Cardiac septum (tissue), 1 donor: ENCODE measurements at regions of chr16 and their contacts with region 1.

Region 1: DNA sequence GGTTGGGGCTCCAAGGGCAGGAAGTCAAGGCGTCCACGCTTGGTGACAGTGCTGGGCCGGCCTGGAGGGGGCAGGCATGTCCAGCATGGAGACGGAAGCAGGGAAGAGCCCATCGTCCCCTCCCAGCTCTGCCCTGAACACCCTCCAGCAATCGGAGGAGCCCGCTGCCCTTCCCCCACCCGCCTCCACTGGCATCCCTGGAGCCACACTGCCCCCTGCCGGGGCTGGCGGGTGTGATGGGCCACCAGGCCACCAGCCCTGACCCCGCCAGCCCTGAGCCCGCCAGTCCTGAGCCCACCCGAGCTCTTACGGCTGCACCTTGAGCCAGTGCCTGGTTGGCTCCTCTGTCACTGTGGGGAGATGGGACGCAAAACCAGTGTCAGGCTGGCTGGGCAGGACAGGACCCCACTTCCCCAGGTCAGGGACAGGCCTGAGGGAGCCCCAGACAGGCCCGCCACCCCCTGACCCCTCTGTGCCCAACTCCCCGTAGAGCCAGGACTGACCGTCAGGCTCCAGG is 4.1 kb upstream of the CDH15 start:
- DNase-seq: peak; percentile 92

Region 2: GRCh38 chr16:88633684-88634140 is 533.8 kb before region 1 on chr16:
- intact Hi-C with region 1: no loop called
- DNase-seq: no peak

Region 3: DNA sequence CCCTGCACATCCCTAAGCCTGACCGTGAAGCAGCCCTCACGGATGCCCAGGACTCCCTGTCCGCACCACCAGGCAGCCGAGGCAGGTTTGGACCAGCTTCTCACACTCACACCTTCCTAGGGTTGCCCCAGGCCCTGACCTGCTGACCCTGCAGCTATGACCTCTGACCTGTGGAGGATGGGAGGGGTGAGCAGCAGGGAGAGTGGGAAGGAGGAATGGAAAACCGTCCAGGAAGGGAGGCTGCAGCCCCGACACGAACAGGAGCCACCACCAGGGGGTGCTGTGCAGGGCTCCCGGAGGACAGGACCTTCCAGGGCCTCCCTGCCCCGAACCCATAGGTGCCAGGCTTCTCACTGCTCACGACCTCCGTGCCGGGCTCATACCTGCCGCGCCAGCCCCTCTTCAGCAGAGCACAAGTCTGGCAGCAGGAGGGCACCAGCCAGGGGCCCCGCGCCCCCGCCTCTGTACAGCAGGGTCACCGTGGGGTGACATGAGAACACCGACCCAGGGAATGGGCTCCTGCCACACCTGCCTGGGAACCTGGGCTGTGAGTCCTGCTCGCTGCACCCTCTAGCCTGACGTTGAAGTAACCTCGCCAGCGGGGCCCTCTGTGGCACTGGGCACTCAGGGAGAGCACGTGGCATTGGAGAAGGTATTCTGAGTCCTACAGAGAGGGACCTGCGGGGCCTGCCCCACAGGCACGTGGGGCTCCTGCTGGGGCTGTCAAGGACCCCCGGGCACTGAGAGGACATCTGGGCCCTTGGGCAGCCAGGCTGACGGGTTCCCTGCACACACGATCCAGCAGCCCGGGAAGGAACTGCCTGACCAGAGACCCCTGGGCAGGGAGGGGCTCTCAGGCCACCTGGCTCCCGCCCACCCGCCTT is 423.5 kb before region 1 on chr16:
- intact Hi-C with region 1: loop called (anchors 5 kb)
- DNase-seq: peak; percentile 88

Region 4: GRCh38 chr16:88811769-88812512 is 355.5 kb before region 1 on chr16 and contains the start of gene APRT:
- intact Hi-C with region 1: loop called (anchors 5 kb)
- DNase-seq: peak; percentile 98
- total RNA-seq, gene APRT: 46.6 TPM

Region 5: DNA sequence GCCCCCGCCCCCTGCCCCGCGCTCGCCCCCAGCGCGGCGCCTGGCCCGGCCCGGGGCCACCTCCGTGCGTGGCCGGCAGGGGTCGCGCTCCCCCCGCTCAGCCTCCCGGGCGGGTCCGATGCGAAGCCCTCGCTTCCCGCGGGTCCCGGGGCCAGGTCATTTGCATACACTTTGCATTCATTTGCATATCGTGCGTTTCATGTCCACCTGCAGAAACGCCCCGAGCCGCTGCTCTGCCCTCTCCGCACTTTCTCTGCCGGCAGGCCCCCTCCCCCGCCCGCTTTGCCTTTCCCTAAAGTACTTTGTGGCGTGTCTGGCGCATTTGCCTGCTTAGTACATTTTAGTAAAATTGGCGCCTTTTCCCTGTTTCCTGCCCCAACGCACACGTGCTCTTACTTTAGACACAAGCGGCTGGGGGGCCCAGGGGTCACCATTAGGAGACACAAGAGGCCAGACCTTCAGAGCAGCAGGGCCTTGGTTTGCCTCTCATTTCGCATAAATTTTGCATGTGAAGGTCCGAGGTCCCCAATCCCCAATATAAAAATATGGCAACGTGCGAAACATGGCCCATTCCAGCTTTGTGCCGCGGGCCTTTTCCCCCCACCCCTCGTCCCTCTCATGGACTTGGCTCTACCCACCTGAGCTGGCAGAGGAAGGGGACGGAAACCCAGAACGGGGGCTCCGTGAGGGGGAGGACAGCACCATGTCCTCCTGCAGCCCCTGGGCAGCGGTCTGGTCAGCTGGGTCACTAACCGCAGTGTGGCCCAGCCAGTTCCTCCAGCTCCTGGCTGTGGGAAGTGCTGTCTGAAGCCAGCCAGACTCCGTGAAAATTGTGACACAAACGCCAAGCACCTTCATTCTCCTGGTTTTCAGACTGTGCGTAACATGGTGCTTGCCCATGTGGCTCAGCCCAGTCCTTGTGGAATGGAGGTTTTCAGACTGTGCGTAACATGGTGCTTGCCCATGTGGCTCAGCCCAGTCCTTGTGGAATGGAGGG is 225.3 kb before region 1 on chr16:
- intact Hi-C with region 1: loop called (anchors 2 kb)
- DNase-seq: peak; percentile 89

Region 6: DNA sequence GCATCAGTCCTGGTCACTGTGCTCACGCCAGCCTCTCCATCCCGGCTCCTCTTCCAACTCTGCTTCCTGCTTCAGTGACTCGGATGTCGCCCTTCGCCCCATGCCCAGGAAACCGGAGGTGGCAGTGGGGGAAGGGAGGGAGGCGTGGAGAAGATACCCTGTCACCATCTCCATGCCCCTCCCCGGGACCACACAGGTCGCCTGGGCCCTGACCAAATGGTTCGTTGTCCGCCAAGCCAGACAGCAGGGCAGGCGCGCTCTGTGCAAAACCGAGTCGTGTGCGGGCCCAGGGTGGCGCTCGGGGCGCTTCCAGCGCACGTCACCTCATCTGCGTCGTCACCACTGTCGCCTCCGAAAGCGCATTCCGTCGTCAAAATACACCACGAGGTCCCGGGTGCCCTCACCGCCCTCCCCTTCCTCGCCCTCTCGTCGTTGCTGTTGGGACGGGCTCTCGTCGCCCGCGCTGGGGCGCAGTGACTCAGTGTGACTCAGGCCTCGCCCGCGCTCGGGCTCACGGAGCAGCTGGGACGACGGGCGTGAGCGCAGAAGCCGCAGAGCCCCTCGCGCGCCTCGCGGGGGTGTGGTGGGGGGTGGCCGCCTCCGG is 89.3 kb after region 1 on chr16:
- intact Hi-C with region 1: no loop called
- DNase-seq: no peak

Region 7: GRCh38 chr16:89279666-89280481 is 112.4 kb after region 1 on chr16:
- intact Hi-C with region 1: no loop called
- DNase-seq: no peak